Activated B cell treated with CpG ODN at 0.5 μM for 24 hours (primary cell): ENCODE measurements at regions of chr5 and their contacts with region 1.

Region 1: GRCh38 chr5:56481428-56482357 is 248.6 kb upstream of the ANKRD55 start:
- DNase-seq: peak; percentile 41
- ATAC-seq: peak; percentile 14
- H3K4me3 Mint-ChIP-seq: peak overlapping the region; percentile 88
- H3K27ac Mint-ChIP-seq: peak overlapping the region; percentile 92
- H3K4me1 Mint-ChIP-seq: peaks cover 45% of the 10 kb centered on the region
- H3K27me3 Mint-ChIP-seq: no peaks in the 10 kb centered on the region
- CTCF ChIP-seq: no peak

Region 2: DNA sequence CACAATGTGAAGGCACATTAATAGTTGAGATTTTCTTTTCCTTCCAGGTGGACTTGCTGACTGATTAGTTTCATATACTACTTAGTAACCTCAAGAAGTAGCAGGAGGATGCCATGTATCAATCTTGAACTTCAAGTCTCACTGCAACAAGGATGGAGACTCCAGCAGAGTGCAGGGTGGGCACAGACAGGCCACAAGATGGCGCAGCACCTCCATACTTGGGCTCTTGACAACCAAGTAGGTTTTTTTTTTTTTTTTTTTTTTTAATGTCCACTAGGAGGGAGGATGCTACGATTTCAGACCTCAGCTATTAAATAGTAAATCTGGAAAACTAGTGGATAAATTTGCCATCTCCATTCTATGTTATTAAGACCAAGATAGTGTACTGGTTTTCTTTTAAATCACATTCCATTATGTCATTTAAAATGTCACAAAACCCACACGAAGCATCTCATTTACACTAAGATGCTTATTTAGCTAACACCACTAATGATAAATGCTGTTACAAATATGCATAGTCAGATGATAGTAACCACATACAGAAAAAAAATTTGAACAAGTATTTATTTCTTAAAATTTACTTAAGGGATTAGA is 545.5 kb before region 1 on chr5:
- CTCF ChIA-PET with region 1: no interaction called
- POLR2A ChIA-PET with region 1: no interaction called
- intact Hi-C with region 1: loop called (anchors 10 kb)
- DNase-seq: peak; percentile 56
- ATAC-seq: peak; percentile 93
- H3K4me3 Mint-ChIP-seq: no peak overlapping the region
- H3K27ac Mint-ChIP-seq: no peak overlapping the region
- H3K4me1 Mint-ChIP-seq: no peaks in the 10 kb centered on the region
- H3K27me3 Mint-ChIP-seq: no peaks in the 10 kb centered on the region
- CTCF ChIP-seq: peak; percentile 48

Region 3: DNA sequence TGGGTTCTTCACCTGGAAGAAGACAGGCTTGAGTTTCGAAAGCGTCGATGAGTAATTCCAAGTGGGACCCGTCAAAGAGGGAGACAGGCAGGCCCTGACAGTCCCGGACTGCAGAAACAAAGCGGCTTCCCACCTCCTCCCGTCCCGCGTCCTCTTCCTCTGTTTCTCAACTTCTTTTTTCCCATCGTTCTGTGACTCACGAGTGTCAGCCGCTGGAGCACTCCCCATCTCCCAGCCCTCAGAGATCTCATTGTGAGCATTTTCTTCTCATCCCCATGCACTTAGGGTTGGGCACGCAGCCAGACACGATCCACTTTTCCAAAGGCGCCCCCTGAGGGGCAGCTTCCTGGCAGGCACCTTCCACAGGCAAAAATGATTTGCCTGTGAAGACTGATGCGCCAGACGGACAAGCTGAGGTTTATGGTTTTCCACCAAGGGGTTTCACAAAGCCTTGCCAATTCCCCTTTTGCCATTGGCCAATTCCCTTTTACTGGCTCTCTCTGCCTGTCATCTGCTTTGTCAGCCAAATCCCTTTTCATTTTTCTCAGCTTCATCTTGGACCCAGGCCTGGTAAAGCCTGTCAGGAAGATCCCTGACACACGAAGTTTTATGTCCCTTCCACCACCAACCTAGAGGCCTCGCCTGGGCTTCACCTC is 162.0 kb before region 1 on chr5:
- CTCF ChIA-PET with region 1: interaction called, 3 read pairs
- POLR2A ChIA-PET with region 1: interaction called, 4 read pairs
- intact Hi-C with region 1: loop called (anchors 2 kb)
- DNase-seq: no peak
- ATAC-seq: no peak
- H3K4me3 Mint-ChIP-seq: no peak overlapping the region
- H3K27ac Mint-ChIP-seq: no peak overlapping the region
- H3K4me1 Mint-ChIP-seq: peaks cover 41% of the 10 kb centered on the region
- H3K27me3 Mint-ChIP-seq: no peaks in the 10 kb centered on the region
- CTCF ChIP-seq: no peak

Region 4: GRCh38 chr5:56415356-56415765 is 66.3 kb before region 1 on chr5:
- CTCF ChIA-PET with region 1: interaction called, 5 read pairs
- POLR2A ChIA-PET with region 1: interaction called, 50 read pairs
- intact Hi-C with region 1: loop called (anchors 1 kb)
- DNase-seq: peak; percentile 48
- ATAC-seq: peak; percentile 71
- H3K4me3 Mint-ChIP-seq: peak overlapping the region; percentile 78
- H3K27ac Mint-ChIP-seq: peak overlapping the region; percentile 99
- H3K4me1 Mint-ChIP-seq: peaks cover 82% of the 10 kb centered on the region
- H3K27me3 Mint-ChIP-seq: no peaks in the 10 kb centered on the region
- CTCF ChIP-seq: no peak

Region 5: DNA sequence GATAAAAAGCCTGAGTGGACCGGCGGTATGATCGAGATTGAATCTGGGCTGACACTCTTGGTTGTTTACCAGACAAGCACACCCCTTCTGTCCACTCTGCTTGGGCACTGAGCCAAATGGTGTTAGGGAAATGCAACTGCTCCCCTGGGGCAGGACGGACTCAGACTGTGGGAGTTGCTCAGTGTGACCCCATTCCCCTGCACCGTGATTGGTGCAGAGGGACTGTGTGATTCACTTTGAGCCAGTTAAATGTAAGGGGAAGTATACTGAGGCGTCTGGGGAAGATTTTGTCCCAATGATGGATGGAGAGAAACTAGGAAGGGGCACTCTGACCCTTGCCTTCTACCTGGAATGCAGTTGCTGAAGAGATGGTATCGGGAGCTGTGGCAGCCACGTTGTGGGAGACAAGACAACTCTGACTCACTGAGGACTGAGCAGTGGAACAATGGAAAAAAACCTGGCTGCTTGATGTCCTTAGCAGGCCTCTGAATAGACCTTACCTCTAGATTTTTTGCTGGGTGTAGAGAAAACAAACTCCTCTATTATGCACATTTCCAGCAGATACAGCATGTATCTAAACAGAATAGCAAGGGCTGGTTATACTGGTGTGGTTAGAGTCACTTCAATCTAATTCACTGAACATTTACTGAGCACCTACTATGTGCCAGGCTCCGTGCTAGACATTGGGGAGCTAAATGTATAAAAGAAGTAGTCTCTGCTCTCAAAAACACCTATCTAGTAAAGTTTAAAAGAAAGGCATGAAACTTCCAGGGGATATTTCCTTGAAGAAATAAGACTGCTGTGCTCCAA is 52.4 kb before region 1 on chr5:
- CTCF ChIA-PET with region 1: no interaction called
- POLR2A ChIA-PET with region 1: no interaction called
- intact Hi-C with region 1: no loop called
- DNase-seq: no peak
- ATAC-seq: no peak
- H3K4me3 Mint-ChIP-seq: no peak overlapping the region
- H3K27ac Mint-ChIP-seq: no peak overlapping the region
- H3K4me1 Mint-ChIP-seq: peaks cover 9% of the 10 kb centered on the region
- H3K27me3 Mint-ChIP-seq: no peaks in the 10 kb centered on the region
- CTCF ChIP-seq: no peak

Region 6: GRCh38 chr5:56588636-56589480 is 107.2 kb after region 1 on chr5:
- CTCF ChIA-PET with region 1: interaction called, 7 read pairs
- POLR2A ChIA-PET with region 1: interaction called, 20 read pairs
- intact Hi-C with region 1: loop called (anchors 1 kb)
- DNase-seq: peak; percentile 69
- ATAC-seq: peak; percentile 86
- H3K4me3 Mint-ChIP-seq: peak overlapping the region; percentile 64
- H3K27ac Mint-ChIP-seq: peak overlapping the region; percentile 97
- H3K4me1 Mint-ChIP-seq: peaks cover 69% of the 10 kb centered on the region
- H3K27me3 Mint-ChIP-seq: no peaks in the 10 kb centered on the region
- CTCF ChIP-seq: no peak

Region 7: DNA sequence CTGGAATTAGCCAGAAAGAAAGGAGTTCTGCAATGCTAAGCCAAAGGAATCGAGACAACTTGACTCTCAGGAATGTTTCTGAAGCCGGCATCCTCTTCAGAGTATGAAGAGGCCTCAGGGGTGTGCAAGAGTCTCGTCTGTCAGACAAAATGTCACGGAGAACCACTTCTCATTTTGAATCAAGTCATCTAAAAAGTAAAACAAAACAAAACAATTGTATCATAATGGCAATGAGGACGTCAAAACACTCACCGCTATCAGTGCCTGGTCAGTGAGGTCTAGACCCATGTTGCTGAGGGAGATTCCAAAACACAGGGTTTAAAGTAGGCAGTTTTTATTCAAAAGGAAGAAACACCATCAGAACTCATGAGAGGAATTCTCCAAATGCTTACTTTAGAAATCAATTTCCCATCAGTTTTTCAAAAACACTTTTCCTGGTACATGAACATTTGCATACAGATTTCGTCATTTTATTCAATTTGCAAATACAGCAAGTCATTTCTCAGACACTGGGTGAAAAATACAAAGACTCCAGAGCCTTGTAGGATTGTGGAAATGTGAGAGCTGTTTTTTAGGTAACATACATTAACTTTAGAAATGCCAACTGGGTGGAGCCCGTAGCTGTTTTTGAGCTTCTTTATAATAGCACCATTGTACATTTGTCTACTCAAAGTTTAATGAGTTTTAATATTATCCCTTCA is 244.2 kb after region 1 on chr5:
- CTCF ChIA-PET with region 1: no interaction called
- POLR2A ChIA-PET with region 1: no interaction called
- intact Hi-C with region 1: loop called (anchors 5 kb)
- DNase-seq: no peak
- ATAC-seq: no peak
- H3K4me3 Mint-ChIP-seq: peak overlapping the region; percentile 19
- H3K27ac Mint-ChIP-seq: peak overlapping the region; percentile 71
- H3K4me1 Mint-ChIP-seq: peaks cover 32% of the 10 kb centered on the region
- H3K27me3 Mint-ChIP-seq: no peaks in the 10 kb centered on the region
- CTCF ChIP-seq: no peak

Region 8: GRCh38 chr5:57749396-57749795 is 1267.7 kb after region 1 on chr5:
- CTCF ChIA-PET with region 1: no interaction called
- POLR2A ChIA-PET with region 1: no interaction called
- intact Hi-C with region 1: no loop called
- DNase-seq: no peak
- ATAC-seq: no peak
- H3K4me3 Mint-ChIP-seq: no peak overlapping the region
- H3K27ac Mint-ChIP-seq: no peak overlapping the region
- H3K4me1 Mint-ChIP-seq: no peaks in the 10 kb centered on the region
- H3K27me3 Mint-ChIP-seq: peaks cover 4% of the 10 kb centered on the region
- CTCF ChIP-seq: no peak